Mammary epithelial cell (primary cell): ENCODE measurements at regions of chr2 and their contacts with region 1.

Region 1: DNA sequence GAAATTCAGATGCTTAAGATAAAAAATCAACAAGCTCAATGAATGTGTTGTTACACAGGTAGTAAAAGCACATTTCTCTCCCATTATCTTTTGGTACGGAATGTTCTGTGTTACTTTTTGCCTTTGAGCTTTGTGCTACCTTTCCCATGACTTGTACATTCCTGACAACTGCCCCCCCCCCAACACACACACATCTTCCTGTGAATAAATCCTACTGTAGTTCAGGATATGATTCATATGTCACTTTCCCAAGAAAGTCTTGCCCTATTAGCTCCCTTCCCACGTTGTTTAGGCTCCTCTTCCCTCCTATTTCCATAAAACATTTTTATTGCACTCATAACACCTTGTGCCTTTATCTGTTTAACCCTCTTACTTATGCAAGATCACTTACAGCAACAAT is 442.6 kb upstream of the LRATD1 start:
- DNase-seq: peak; percentile 82
- H3K4me3 ChIP-seq: no peak overlapping the region
- H3K27ac ChIP-seq: peak overlapping the region; percentile 87
- H3K4me1 ChIP-seq: peaks cover 24% of the 10 kb centered on the region
- H3K27me3 ChIP-seq: no peaks in the 10 kb centered on the region
- CTCF ChIP-seq: no peak

Region 2: DNA sequence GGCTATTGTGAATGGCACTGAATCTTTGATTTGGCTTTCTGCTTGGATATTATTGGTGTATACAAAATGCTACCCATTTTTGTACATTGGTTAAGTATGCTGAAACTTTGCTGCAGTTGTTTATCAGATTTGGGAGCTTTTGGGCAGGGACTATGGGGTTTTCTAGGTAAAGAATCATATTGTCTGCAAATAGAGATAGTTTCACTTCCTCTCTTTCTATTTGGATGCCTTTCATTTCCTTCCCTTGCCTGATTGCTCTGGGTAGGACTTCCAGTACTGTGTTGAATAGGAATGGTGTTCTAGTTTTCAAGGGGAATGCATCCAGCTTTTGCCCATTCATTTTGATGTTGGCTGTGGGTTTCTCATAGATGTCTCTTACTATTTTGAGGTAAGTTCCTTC is 46.5 kb before region 1 on chr2:
- CTCF ChIA-PET with region 1: no interaction called
- dilution Hi-C with region 1: loop called (anchors 5 kb)
- in situ Hi-C with region 1: no loop called
- intact Hi-C with region 1: no loop called
- DNase-seq: no peak
- H3K4me3 ChIP-seq: no peak overlapping the region
- H3K27ac ChIP-seq: no peak overlapping the region
- H3K4me1 ChIP-seq: no peaks in the 10 kb centered on the region
- H3K27me3 ChIP-seq: no peaks in the 10 kb centered on the region
- CTCF ChIP-seq: no peak

Region 3: DNA sequence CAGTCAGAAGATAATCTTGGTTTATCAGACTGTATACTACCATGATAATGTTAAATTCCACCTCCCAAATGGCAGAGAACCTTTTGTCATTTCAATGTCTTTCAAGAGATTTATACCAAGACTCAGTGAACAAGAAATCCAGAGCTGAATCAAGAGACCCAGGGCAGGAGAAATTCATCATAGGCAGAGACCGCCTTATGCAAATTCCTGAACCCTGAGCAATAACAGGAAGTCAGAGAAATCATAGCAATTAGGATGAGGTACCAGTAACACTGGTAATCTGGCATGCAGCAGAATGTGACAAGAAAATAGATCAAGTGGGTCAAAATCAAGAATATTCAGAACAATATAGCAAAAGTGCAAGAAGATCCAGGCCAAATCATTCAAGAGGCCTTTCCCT is 30.2 kb after region 1 on chr2:
- CTCF ChIA-PET with region 1: no interaction called
- dilution Hi-C with region 1: no loop called
- in situ Hi-C with region 1: no loop called
- intact Hi-C with region 1: no loop called
- DNase-seq: no peak
- H3K4me3 ChIP-seq: no peak overlapping the region
- H3K27ac ChIP-seq: no peak overlapping the region
- H3K4me1 ChIP-seq: peaks cover 13% of the 10 kb centered on the region
- H3K27me3 ChIP-seq: no peaks in the 10 kb centered on the region
- CTCF ChIP-seq: no peak

Region 4: GRCh38 chr2:14480906-14481305 is 291.0 kb after region 1 on chr2:
- CTCF ChIA-PET with region 1: no interaction called
- dilution Hi-C with region 1: no loop called
- in situ Hi-C with region 1: no loop called
- intact Hi-C with region 1: no loop called
- DNase-seq: no peak
- H3K4me3 ChIP-seq: no peak overlapping the region
- H3K27ac ChIP-seq: no peak overlapping the region
- H3K4me1 ChIP-seq: no peaks in the 10 kb centered on the region
- H3K27me3 ChIP-seq: no peaks in the 10 kb centered on the region
- CTCF ChIP-seq: peak in 1 of 2 donors; percentile 22